Tibial artery (tissue), 4 donors: ENCODE measurements at regions of chr3 and their contacts with region 1.

Region 1: DNA sequence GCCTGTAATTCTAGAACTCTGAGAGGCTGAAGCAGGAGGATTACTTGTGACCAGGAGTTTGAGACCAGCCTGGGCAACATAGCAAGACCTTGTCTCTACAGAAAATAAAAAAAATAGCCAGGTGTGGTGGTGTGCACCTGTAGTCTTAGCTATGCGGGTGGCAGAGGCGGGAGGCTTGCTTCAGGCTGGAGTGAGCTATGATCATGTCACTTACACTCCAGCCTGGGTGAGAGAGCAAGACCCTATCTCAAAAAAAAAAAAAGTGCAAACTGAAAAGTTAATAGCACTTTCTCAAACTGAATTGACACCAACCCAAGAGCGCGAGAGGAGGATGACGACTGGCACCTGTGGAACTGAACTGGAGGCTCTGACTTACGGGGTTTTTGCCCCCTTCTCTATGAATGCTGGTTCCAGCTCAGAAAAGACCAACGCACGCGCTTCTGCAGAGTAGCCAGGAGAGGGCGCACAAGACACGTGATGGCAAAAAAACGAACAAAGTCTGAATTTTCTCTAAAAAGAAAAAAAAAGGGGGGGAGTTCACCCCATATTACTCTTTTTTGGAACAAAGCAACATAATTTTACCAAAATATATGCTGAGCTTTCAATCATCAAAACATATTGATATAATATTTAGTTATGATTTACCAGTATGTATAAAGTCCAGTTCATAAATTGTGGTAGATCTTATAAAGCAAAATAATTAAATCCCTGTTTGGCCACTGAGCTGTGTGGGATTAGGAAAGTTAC is 23.7 kb downstream of the CFAP92 start:
- DNase-seq: peak in 1 of 2 donors; percentile 35
- H3K4me3 ChIP-seq: no peak overlapping the region
- H3K27ac ChIP-seq: no peak overlapping the region
- H3K4me1 ChIP-seq: peaks cover 0 to 9% (median 2%) of the 10 kb centered on the region in 4 donors
- H3K27me3 ChIP-seq: no peaks in the 10 kb centered on the region
- CTCF ChIP-seq: peak; percentile 81 to 86

Region 2: GRCh38 chr3:129106331-129106730 is 136.2 kb after region 1 on chr3:
- intact Hi-C with region 1: loop called (anchors 10 kb)
- DNase-seq: no peak
- H3K4me3 ChIP-seq: no peak overlapping the region
- H3K27ac ChIP-seq: no peak overlapping the region
- H3K4me1 ChIP-seq: peaks cover 0 to 10% (median 0%) of the 10 kb centered on the region in 4 donors
- H3K27me3 ChIP-seq: no peaks in the 10 kb centered on the region
- CTCF ChIP-seq: no peak

Region 3: GRCh38 chr3:129249276-129250065 is 279.3 kb after region 1 on chr3 and contains the start of gene COPG1:
- intact Hi-C with region 1: loop called (anchors 5 kb)
- DNase-seq: peak; percentile 80 to 93
- H3K4me3 ChIP-seq: peak within 1 kb of the TSS; percentile 78 to 84
- H3K27ac ChIP-seq: peak within 1 kb of the TSS; percentile 89 to 90
- H3K4me1 ChIP-seq: peaks cover 0 to 58% (median 37%) of the 10 kb centered on the region in 4 donors
- H3K27me3 ChIP-seq: no peaks in the 10 kb centered on the region
- CTCF ChIP-seq: no peak